ENCODE measurements at regions of chr11 and their contacts with region 1.

Region 1: DNA sequence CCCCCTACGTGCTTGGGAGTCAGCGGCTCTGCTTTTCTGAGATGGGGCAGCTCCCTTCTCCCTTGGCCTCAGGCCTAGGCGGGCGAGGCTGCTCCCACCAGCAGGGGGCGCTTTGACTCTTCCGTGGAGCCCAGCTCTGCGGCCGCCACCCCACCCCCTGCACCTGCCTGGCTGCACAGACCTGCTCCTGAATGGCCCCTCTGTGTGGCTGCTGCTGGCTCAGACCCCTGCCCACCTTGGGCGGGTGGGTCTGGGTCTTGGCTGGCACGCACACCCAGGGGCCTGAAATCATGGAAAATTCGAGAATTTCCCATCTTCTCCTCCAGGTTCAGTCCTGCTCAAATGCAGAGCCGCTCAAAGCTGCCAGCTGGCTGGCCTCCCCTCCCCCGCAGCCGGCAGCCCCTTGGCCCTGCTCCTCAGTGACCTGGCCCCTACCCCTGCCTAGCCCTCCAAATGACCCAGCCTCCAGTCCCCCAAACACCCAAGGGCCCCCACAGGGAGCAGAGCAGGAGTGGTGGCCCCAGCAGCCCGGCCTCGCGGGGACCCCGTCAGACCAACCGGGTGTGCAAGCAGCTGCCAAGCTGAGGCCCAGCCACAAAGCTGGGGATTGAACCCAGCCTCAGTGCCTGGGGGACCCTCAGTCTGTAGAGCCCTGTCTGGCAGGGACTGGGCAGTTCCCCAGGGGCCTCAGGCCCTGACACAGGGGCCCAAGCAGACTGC is 9.0 kb downstream of the PRR33 start:
- DNase-seq: peak; percentile 71 to 92 (median 76)
- ATAC-seq: peak; percentile 91
- H3K4me3 ChIP-seq: no peak overlapping the region
- H3K4me3 Mint-ChIP-seq: no peak overlapping the region
- H3K27ac ChIP-seq: peak overlapping the region in 1 of 2 donors; percentile 29
- H3K27ac Mint-ChIP-seq: peak overlapping the region; percentile 57
- H3K4me1 ChIP-seq: peaks cover 47% of the 10 kb centered on the region
- H3K4me1 Mint-ChIP-seq: peaks cover 16% of the 10 kb centered on the region
- H3K27me3 ChIP-seq: no peaks in the 10 kb centered on the region
- H3K27me3 Mint-ChIP-seq: no peaks in the 10 kb centered on the region
- CTCF ChIP-seq: peak; percentile 93

Region 2: DNA sequence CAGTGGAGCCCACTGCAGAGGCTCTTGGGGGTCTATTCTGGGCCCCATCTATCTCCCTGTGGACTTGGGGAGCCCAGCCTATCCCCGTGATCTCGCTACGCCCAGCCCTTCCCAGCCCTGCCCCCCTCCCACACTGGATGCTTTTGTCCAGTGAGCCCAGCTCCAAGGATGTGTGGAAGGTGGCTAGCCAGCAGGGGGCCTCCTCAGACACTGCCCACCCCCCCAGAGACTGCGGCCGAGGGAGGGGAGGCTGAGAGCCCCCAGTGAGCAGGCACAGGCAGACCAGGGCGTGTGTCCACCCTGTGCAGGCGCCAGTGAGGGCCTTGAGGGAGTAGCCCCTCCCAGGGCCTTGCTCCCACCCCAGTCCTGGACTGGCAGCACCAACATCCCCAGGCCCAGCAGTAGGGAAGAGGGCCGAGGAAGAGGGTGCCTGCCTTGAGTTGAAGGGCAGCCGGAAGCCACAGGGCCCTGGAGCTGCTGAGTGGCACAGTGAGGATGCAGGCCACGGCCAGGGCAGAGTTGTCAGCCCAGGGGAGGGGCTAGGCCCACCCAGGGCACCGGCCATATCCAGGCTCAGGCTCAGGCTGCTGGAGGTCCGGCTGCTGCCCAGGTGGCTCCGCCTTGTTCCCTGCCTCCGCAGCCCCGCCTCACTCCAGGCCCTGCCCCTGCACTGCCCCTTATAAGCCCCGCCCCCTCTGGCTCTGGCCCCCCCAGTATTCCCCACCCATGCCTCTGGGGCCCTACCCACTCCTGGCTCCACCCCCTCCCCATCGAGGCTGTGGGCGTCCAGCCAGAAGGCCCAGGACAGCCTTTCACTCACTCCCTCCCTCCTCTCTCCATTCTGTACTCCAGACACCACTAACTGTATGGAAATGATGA is 424.1 kb before region 1 on chr11:
- CTCF ChIA-PET with region 1: no interaction called
- POLR2A ChIA-PET with region 1: no interaction called
- intact Hi-C with region 1: no loop called
- DNase-seq: no peak
- ATAC-seq: no peak
- H3K4me3 ChIP-seq: no peak overlapping the region
- H3K4me3 Mint-ChIP-seq: no peak overlapping the region
- H3K27ac ChIP-seq: no peak overlapping the region
- H3K27ac Mint-ChIP-seq: no peak overlapping the region
- H3K4me1 ChIP-seq: peaks cover 9% of the 10 kb centered on the region
- H3K4me1 Mint-ChIP-seq: no peaks in the 10 kb centered on the region
- H3K27me3 ChIP-seq: no peaks in the 10 kb centered on the region
- H3K27me3 Mint-ChIP-seq: no peaks in the 10 kb centered on the region
- CTCF ChIP-seq: no peak

Region 3: GRCh38 chr11:1739576-1739975 is 143.1 kb before region 1 on chr11:
- CTCF ChIA-PET with region 1: no interaction called
- POLR2A ChIA-PET with region 1: no interaction called
- intact Hi-C with region 1: no loop called
- DNase-seq: no peak
- ATAC-seq: no peak
- H3K4me3 ChIP-seq: no peak overlapping the region
- H3K4me3 Mint-ChIP-seq: no peak overlapping the region
- H3K27ac ChIP-seq: no peak overlapping the region
- H3K27ac Mint-ChIP-seq: no peak overlapping the region
- H3K4me1 ChIP-seq: no peaks in the 10 kb centered on the region
- H3K4me1 Mint-ChIP-seq: no peaks in the 10 kb centered on the region
- H3K27me3 ChIP-seq: peaks cover 0 to 3% of the 10 kb centered on the region in 2 experiments
- H3K27me3 Mint-ChIP-seq: peaks cover 4% of the 10 kb centered on the region
- CTCF ChIP-seq: no peak

Region 4: DNA sequence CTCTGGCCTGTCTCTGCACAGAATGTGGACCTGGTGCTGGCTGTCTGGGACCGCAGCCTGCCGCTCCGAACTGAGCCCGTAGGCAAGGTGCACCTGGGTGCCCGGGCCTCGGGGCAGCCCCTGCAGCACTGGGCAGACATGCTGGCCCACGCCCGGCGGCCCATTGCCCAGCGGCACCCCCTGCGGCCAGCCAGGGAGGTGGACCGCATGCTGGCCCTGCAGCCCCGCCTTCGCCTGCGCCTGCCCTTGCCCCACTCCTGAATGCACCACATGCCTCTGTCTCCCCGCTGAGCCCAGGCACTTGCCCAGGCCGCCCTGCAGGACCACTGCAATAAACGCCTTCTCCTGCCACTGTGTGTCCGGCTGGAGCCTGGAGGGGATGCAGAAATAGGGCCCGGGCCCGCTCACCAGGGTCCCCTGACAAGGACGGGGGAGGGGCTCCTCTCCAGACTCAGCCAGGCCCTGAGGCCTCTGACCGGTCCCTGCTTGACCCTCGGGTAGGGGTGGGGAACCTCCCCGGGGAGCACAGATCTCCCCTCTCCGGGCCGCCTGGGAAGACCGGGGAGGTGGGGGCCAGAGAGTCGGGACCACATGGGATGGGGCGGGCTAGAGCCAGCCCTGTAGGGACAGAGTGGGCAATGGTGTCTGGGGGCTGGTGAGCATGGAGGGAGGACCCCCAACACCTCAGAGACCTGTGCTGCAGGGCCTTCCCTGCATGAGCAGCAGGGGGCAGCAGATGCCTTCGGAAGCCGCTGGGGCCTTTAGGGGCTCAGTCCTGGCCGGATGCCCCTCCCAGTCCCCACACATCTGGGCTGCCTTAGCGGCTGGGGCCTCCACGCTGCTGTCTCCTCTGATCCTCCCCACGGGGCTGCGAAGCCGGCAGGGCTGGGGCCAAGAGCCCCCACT is 45.3 kb before region 1 on chr11:
- CTCF ChIA-PET with region 1: interaction called, 5 read pairs
- POLR2A ChIA-PET with region 1: no interaction called
- intact Hi-C with region 1: loop called (anchors 2 kb)
- DNase-seq: peak; percentile 71 to 90 (median 78)
- ATAC-seq: peak; percentile 94
- H3K4me3 ChIP-seq: no peak overlapping the region
- H3K4me3 Mint-ChIP-seq: no peak overlapping the region
- H3K27ac ChIP-seq: no peak overlapping the region
- H3K27ac Mint-ChIP-seq: no peak overlapping the region
- H3K4me1 ChIP-seq: peaks cover 31% of the 10 kb centered on the region
- H3K4me1 Mint-ChIP-seq: peaks cover 10% of the 10 kb centered on the region
- H3K27me3 ChIP-seq: peaks cover 2 to 8% of the 10 kb centered on the region in 2 experiments
- H3K27me3 Mint-ChIP-seq: no peaks in the 10 kb centered on the region
- CTCF ChIP-seq: peak; percentile 95

Region 5: GRCh38 chr11:1844221-1845094 is 38.2 kb before region 1 on chr11:
- CTCF ChIA-PET with region 1: interaction called, 13 read pairs
- POLR2A ChIA-PET with region 1: interaction called, 3 read pairs
- intact Hi-C with region 1: no loop called
- DNase-seq: peak in 10 of 14 experiments; percentile 25 to 78 (median 52)
- ATAC-seq: peak; percentile 61
- H3K4me3 ChIP-seq: peak overlapping the region; percentile 41
- H3K4me3 Mint-ChIP-seq: peak overlapping the region; percentile 74
- H3K27ac ChIP-seq: peak overlapping the region; percentile 23 to 35
- H3K27ac Mint-ChIP-seq: peak overlapping the region; percentile 90
- H3K4me1 ChIP-seq: peaks cover 78% of the 10 kb centered on the region
- H3K4me1 Mint-ChIP-seq: peaks cover 53% of the 10 kb centered on the region
- H3K27me3 ChIP-seq: no peaks in the 10 kb centered on the region
- H3K27me3 Mint-ChIP-seq: no peaks in the 10 kb centered on the region
- CTCF ChIP-seq: no peak

Region 6: GRCh38 chr11:1852877-1853276 is 29.8 kb before region 1 on chr11 and contains the start of gene LSP1:
- CTCF ChIA-PET with region 1: interaction called, 37 read pairs
- POLR2A ChIA-PET with region 1: interaction called, 23 read pairs
- intact Hi-C with region 1: loop called in 1 of 2 experiments (anchors 2 kb)
- DNase-seq: peak; percentile 68 to 93 (median 82)
- ATAC-seq: peak; percentile 69
- H3K4me3 ChIP-seq: peak within 1 kb of the TSS; percentile 94
- H3K4me3 Mint-ChIP-seq: peak within 1 kb of the TSS; percentile 98
- H3K27ac ChIP-seq: peak within 1 kb of the TSS; percentile 88 to 91
- H3K27ac Mint-ChIP-seq: peak within 1 kb of the TSS; percentile 91
- H3K4me1 ChIP-seq: peaks cover 93% of the 10 kb centered on the region
- H3K4me1 Mint-ChIP-seq: peaks cover 51% of the 10 kb centered on the region
- H3K27me3 ChIP-seq: no peaks in the 10 kb centered on the region
- H3K27me3 Mint-ChIP-seq: no peaks in the 10 kb centered on the region
- CTCF ChIP-seq: no peak
- total RNA-seq, gene LSP1: 228 to 232 TPM

Region 7: DNA sequence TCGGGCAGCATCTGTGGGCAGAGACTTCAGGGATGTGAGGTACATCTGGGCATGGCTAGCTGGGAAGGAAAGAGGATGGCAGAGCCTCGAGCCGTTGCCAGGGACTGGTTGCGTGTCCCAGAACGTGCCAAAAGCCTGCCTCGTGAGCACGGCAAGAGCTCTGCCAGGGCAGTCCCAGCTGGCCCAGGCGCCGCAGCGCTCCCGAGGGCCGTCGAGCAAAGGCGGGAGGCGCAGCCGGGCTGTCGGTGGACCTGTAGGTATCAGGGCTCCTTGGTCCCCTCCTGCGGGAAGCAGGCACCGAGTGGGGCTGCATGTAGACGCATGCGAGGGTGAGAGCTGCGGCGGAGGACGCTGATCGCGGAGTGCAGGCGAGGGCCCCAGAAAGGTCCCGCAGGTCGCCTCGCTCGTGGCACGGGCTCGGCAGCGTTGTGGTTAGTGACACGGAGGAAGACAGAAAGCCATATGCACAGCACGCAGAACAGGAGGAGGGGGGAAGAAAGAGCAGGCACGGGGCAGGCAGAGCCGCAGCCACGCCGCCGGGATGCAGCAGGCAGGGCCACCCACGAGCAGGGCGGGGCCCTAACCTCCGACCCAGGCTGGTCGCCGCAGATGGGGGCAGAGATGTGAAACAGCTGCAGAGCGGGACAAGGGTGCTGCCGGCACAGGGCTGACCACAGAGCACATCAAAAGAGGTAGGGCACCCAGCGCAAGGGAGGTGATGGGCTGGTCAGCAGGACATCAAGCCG is 11.8 kb before region 1 on chr11:
- CTCF ChIA-PET with region 1: interaction called, 17 read pairs
- POLR2A ChIA-PET with region 1: interaction called, 4 read pairs
- intact Hi-C with region 1: no loop called
- DNase-seq: peak in 13 of 14 experiments; percentile 27 to 82 (median 42)
- ATAC-seq: peak; percentile 90
- H3K4me3 ChIP-seq: peak overlapping the region; percentile 28
- H3K4me3 Mint-ChIP-seq: peak overlapping the region; percentile 70
- H3K27ac ChIP-seq: peak overlapping the region; percentile 22 to 48
- H3K27ac Mint-ChIP-seq: peak overlapping the region; percentile 86
- H3K4me1 ChIP-seq: peaks cover 93% of the 10 kb centered on the region
- H3K4me1 Mint-ChIP-seq: peaks cover 59% of the 10 kb centered on the region
- H3K27me3 ChIP-seq: no peaks in the 10 kb centered on the region
- H3K27me3 Mint-ChIP-seq: no peaks in the 10 kb centered on the region
- CTCF ChIP-seq: no peak

Region 8: GRCh38 chr11:1917671-1918516 is 35.2 kb after region 1 on chr11:
- CTCF ChIA-PET with region 1: interaction called, 4 read pairs
- POLR2A ChIA-PET with region 1: interaction called, 40 read pairs
- intact Hi-C with region 1: loop called in 1 of 2 experiments (anchors 5 kb)
- DNase-seq: peak in 5 of 14 experiments; percentile 12 to 48 (median 32)
- ATAC-seq: peak; percentile 54
- H3K4me3 ChIP-seq: no peak overlapping the region
- H3K4me3 Mint-ChIP-seq: no peak overlapping the region
- H3K27ac ChIP-seq: no peak overlapping the region
- H3K27ac Mint-ChIP-seq: no peak overlapping the region
- H3K4me1 ChIP-seq: peaks cover 29% of the 10 kb centered on the region
- H3K4me1 Mint-ChIP-seq: peaks cover 11% of the 10 kb centered on the region
- H3K27me3 ChIP-seq: no peaks in the 10 kb centered on the region
- H3K27me3 Mint-ChIP-seq: peaks cover 12% of the 10 kb centered on the region
- CTCF ChIP-seq: no peak

Region 9: DNA sequence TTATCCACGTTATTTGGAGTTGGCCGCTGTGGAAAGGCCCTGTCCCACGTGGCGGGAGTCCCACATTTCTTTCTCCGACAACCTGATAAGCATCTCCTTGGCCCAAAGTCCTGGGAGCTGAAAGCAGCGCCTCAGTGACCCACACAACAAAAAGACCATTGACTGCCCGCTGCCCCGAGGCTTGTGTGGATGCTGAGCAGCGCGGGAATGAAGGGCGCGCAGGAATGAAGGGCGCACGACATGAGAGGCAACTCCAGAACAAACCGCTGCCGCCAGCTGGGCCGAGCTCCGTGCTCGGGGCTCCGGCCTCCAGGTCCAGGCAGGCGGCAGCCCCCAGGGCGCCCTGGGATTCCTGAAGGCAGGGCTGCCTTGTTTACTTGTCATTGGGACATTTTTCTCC is 71.8 kb after region 1 on chr11:
- CTCF ChIA-PET with region 1: no interaction called
- POLR2A ChIA-PET with region 1: no interaction called
- intact Hi-C with region 1: no loop called
- DNase-seq: no peak
- ATAC-seq: no peak
- H3K4me3 ChIP-seq: no peak overlapping the region
- H3K4me3 Mint-ChIP-seq: no peak overlapping the region
- H3K27ac ChIP-seq: no peak overlapping the region
- H3K27ac Mint-ChIP-seq: no peak overlapping the region
- H3K4me1 ChIP-seq: no peaks in the 10 kb centered on the region
- H3K4me1 Mint-ChIP-seq: no peaks in the 10 kb centered on the region
- H3K27me3 ChIP-seq: no peaks in the 10 kb centered on the region
- H3K27me3 Mint-ChIP-seq: no peaks in the 10 kb centered on the region
- CTCF ChIP-seq: no peak

Region 10: GRCh38 chr11:2002807-2003206 is 120.1 kb after region 1 on chr11:
- CTCF ChIA-PET with region 1: interaction called, 12 read pairs
- POLR2A ChIA-PET with region 1: no interaction called
- intact Hi-C with region 1: no loop called
- DNase-seq: no peak
- ATAC-seq: peak; percentile 60
- H3K4me3 ChIP-seq: no peak overlapping the region
- H3K4me3 Mint-ChIP-seq: no peak overlapping the region
- H3K27ac ChIP-seq: no peak overlapping the region
- H3K27ac Mint-ChIP-seq: no peak overlapping the region
- H3K4me1 ChIP-seq: no peaks in the 10 kb centered on the region
- H3K4me1 Mint-ChIP-seq: no peaks in the 10 kb centered on the region
- H3K27me3 ChIP-seq: no peaks in the 10 kb centered on the region
- H3K27me3 Mint-ChIP-seq: no peaks in the 10 kb centered on the region
- CTCF ChIP-seq: no peak

Region 11: GRCh38 chr11:2316169-2316972 is 433.7 kb after region 1 on chr11:
- CTCF ChIA-PET with region 1: no interaction called
- POLR2A ChIA-PET with region 1: no interaction called
- intact Hi-C with region 1: no loop called
- DNase-seq: peak in 1 of 14 experiments; percentile 12
- ATAC-seq: no peak
- H3K4me3 ChIP-seq: no peak overlapping the region
- H3K4me3 Mint-ChIP-seq: no peak overlapping the region
- H3K27ac ChIP-seq: no peak overlapping the region
- H3K27ac Mint-ChIP-seq: no peak overlapping the region
- H3K4me1 ChIP-seq: peaks cover 31% of the 10 kb centered on the region
- H3K4me1 Mint-ChIP-seq: peaks cover 6% of the 10 kb centered on the region
- H3K27me3 ChIP-seq: no peaks in the 10 kb centered on the region
- H3K27me3 Mint-ChIP-seq: no peaks in the 10 kb centered on the region
- CTCF ChIP-seq: no peak

Measured in CD4-positive, alpha-beta T cell (primary cell).